ENCODE measurements at regions of chr11 and their contacts with region 1.

Region 1: GRCh38 chr11:122853971-122854446 is 15.7 kb downstream of the CRTAM start:
- ATAC-seq: peak; percentile 8 to 72 (median 48)
- H3K4me3 ChIP-seq: no peak overlapping the region
- H3K27ac ChIP-seq: no peak overlapping the region
- H3K4me1 ChIP-seq: peaks cover 10 to 21% of the 10 kb centered on the region in 2 donors

Region 2: DNA sequence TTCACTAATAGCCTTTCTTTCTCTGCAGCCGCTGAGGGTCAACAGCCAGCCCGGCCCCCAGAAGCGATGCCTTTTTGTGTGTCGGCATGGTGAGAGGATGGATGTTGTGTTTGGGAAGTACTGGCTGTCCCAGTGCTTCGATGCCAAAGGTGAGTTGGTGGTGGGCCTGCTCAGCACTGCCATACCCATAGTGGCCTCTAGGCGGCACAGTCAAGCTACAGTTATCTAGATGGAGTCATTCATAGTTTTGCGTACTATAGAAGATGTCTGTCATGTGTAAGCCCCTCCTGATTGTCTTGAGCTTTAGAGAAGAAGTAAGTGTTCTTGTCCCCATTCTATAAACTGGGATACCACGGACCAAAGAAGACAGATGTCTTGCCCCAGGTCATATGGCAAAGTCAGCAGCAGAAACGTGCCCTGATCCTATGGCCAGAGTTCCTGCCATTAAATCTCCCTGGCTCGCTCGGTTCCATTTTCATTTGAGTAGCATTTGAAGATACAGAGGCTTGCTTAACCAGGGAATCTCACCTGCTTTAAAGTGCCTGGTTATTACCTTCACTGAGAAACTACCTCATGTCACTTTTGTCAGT is 57.8 kb before region 1 on chr11:
- in situ Hi-C with region 1: loop called in 1 of 9 experiments (anchors 10 kb)
- ATAC-seq: peak in 4 of 8 experiments; percentile 26 to 73 (median 62)
- H3K4me3 ChIP-seq: no peak overlapping the region
- H3K27ac ChIP-seq: no peak overlapping the region
- H3K4me1 ChIP-seq: no peaks in the 10 kb centered on the region

Region 3: GRCh38 chr11:123033895-123034294 is 179.9 kb after region 1 on chr11:
- in situ Hi-C with region 1: loop called in 3 of 9 experiments (anchors 25 kb)
- ATAC-seq: peak in 2 of 8 experiments; percentile 30 to 50
- H3K4me3 ChIP-seq: no peak overlapping the region
- H3K27ac ChIP-seq: no peak overlapping the region
- H3K4me1 ChIP-seq: peaks cover 0 to 3% of the 10 kb centered on the region in 2 donors

Measured in motor neuron (in vitro differentiated cells).